CD8-positive, alpha-beta T cell (primary cell): ENCODE measurements at regions of chr5 and their contacts with region 1.

Region 1: GRCh38 chr5:121993209-121993608 is 31.4 kb downstream of the SRFBP1 start:
- DNase-seq: no peak
- ATAC-seq: no peak
- H3K4me3 ChIP-seq: no peak overlapping the region
- H3K4me3 Mint-ChIP-seq: no peak overlapping the region
- H3K27ac ChIP-seq: no peak overlapping the region
- H3K27ac Mint-ChIP-seq: no peak overlapping the region
- H3K4me1 ChIP-seq: no peaks in the 10 kb centered on the region
- H3K4me1 Mint-ChIP-seq: peaks cover 9% of the 10 kb centered on the region
- H3K27me3 ChIP-seq: no peaks in the 10 kb centered on the region
- H3K27me3 Mint-ChIP-seq: no peaks in the 10 kb centered on the region
- CTCF ChIP-seq: no peak

Region 2: DNA sequence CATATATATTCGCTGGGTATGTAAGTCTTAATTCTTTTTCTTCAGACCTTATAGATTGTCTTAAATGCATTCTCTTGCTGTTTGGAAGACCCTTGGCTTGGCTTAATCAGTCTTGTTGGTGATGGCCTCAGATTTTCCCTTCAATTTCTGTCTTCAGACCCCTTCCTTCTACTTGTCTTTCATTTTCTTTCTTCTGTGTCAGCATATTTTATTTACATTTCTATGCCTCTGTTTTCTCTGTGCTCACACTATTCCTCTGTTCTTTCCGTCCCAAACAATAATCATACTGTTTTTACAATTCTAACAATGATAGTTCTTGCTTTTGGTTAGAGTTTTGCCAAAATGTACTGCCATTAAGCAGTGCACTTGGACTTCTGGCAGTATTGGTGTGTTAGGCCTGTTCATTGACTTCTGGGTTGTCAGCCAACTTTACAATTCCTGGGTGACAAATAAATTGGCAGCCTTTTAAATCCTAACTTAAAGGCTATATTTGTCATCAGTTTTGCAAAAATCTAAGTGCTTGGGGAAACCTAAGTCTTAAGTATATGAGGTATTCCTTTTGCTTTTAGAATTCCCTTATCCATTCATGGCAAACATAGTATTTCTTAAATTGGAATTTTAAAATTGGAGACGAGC is 23.4 kb before region 1 on chr5:
- CTCF ChIA-PET with region 1: no interaction called
- POLR2A ChIA-PET with region 1: no interaction called
- intact Hi-C with region 1: no loop called
- DNase-seq: no peak
- ATAC-seq: no peak
- H3K4me3 ChIP-seq: no peak overlapping the region
- H3K4me3 Mint-ChIP-seq: no peak overlapping the region
- H3K27ac ChIP-seq: no peak overlapping the region
- H3K27ac Mint-ChIP-seq: no peak overlapping the region
- H3K4me1 ChIP-seq: no peaks in the 10 kb centered on the region
- H3K4me1 Mint-ChIP-seq: peaks cover 39% of the 10 kb centered on the region
- H3K27me3 ChIP-seq: no peaks in the 10 kb centered on the region
- H3K27me3 Mint-ChIP-seq: no peaks in the 10 kb centered on the region
- CTCF ChIP-seq: no peak

Region 3: DNA sequence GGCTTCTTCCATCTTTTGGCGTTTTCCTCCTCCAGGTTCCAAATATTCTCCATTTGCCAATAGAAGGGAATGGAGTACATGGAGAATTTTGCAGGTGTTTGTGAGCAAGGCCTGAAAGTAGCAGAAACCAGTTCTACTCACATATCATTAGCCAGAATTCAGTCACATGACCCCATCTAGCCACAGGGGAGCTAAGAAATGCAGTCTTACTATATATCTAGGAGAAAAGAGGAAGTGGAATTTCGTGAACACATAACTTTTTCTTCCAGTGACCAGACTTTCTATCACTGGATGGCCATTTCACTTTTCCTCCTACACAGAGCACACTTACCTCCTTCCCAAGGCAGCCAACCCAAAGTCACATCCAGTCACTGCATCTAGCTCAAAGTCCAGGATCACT is 29.8 kb after region 1 on chr5:
- CTCF ChIA-PET with region 1: no interaction called
- POLR2A ChIA-PET with region 1: no interaction called
- intact Hi-C with region 1: loop called in 1 of 2 experiments (anchors 1 kb)
- DNase-seq: no peak
- ATAC-seq: no peak
- H3K4me3 ChIP-seq: no peak overlapping the region
- H3K4me3 Mint-ChIP-seq: no peak overlapping the region
- H3K27ac ChIP-seq: no peak overlapping the region
- H3K27ac Mint-ChIP-seq: no peak overlapping the region
- H3K4me1 ChIP-seq: no peaks in the 10 kb centered on the region
- H3K4me1 Mint-ChIP-seq: no peaks in the 10 kb centered on the region
- H3K27me3 ChIP-seq: no peaks in the 10 kb centered on the region
- H3K27me3 Mint-ChIP-seq: no peaks in the 10 kb centered on the region
- CTCF ChIP-seq: no peak

Region 4: DNA sequence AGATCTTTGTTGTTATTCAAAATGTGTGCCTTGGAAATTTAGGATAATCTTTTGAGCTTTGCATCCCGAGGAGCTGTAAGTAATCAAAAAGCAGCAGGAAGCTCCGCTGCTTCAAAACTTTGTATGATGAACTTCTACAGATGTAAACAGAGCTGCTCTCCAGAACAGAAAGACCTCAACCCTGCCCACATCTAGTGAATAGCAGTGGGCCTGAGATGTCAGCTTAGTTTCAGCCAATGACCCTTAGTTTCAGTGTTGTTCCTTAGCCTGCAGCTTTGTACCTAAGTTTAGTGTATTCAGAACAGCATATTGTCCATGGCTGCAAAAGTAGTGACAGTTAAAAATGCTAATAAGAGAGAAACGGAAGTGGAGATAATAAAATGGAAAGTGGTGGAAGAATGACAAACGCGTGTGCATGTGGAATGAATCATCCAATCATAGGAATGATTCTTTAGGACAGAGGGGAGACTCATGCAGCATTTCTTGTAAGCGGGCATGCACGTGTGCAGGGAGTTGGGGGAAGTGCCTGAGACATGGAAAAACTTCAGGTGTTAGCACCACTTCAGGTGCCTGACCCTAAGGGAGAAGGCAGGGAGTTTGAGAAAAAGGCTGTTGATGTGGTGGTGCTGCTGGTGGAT is 877.1 kb after region 1 on chr5:
- CTCF ChIA-PET with region 1: no interaction called
- POLR2A ChIA-PET with region 1: no interaction called
- intact Hi-C with region 1: no loop called
- DNase-seq: no peak
- ATAC-seq: no peak
- H3K4me3 ChIP-seq: no peak overlapping the region
- H3K4me3 Mint-ChIP-seq: no peak overlapping the region
- H3K27ac ChIP-seq: no peak overlapping the region
- H3K27ac Mint-ChIP-seq: no peak overlapping the region
- H3K4me1 ChIP-seq: no peaks in the 10 kb centered on the region
- H3K4me1 Mint-ChIP-seq: no peaks in the 10 kb centered on the region
- H3K27me3 ChIP-seq: no peaks in the 10 kb centered on the region
- H3K27me3 Mint-ChIP-seq: no peaks in the 10 kb centered on the region
- CTCF ChIP-seq: no peak